Activated CD4-positive, alpha-beta T cell treated with anti-CD3 and anti-CD28 coated beads for 36 hours (primary cell): ENCODE measurements at regions of chr1 and their contacts with region 1.

Region 1: GRCh38 chr1:176206961-176207902 is at the start of gene COP1:
- DNase-seq: peak; percentile 97
- ATAC-seq: peak; percentile 82
- H3K4me3 Mint-ChIP-seq: peak within 1 kb of the TSS; percentile 98
- H3K27ac Mint-ChIP-seq: peak within 1 kb of the TSS; percentile 100
- H3K4me1 Mint-ChIP-seq: peaks cover 28% of the 10 kb centered on the region
- H3K27me3 Mint-ChIP-seq: no peaks in the 10 kb centered on the region
- total RNA-seq, gene COP1: 38.7 to 43.4 TPM

Region 2: GRCh38 chr1:176096015-176096414 is 111.2 kb before region 1 on chr1:
- CTCF ChIA-PET with region 1: no interaction called
- POLR2A ChIA-PET with region 1: no interaction called
- intact Hi-C with region 1: no loop called
- DNase-seq: no peak
- ATAC-seq: no peak
- H3K4me3 Mint-ChIP-seq: no peak overlapping the region
- H3K27ac Mint-ChIP-seq: no peak overlapping the region
- H3K4me1 Mint-ChIP-seq: no peaks in the 10 kb centered on the region
- H3K27me3 Mint-ChIP-seq: no peaks in the 10 kb centered on the region

Region 3: DNA sequence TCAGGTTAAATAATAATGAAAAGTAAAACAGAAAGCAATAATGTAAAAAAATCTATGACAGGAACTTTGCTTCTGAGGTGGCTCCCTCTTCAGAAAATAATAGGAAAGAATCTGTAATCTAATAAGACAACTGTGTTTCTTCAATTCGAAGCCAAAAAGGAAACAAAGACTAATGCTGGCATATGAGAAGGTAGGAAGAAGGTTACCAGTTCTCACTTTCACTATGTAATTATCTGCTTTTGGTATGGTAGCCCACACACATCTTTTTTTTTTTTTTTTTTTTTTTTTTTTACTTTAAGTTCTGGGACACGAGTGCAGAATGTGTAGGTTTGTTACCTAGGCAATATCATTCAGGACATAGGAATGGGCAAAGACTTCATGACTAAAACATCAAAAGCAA is 47.2 kb before region 1 on chr1:
- CTCF ChIA-PET with region 1: interaction called, 3 read pairs
- POLR2A ChIA-PET with region 1: interaction called, 5 read pairs
- intact Hi-C with region 1: loop called (anchors 1 to 2 kb)
- DNase-seq: no peak
- ATAC-seq: peak; percentile 70
- H3K4me3 Mint-ChIP-seq: peak overlapping the region; percentile 29
- H3K27ac Mint-ChIP-seq: peak overlapping the region; percentile 79
- H3K4me1 Mint-ChIP-seq: peaks cover 46% of the 10 kb centered on the region
- H3K27me3 Mint-ChIP-seq: no peaks in the 10 kb centered on the region

Region 4: GRCh38 chr1:176193023-176193422 is 14.2 kb before region 1 on chr1:
- CTCF ChIA-PET with region 1: interaction called, 4 read pairs
- POLR2A ChIA-PET with region 1: interaction called, 4 read pairs
- intact Hi-C with region 1: loop called in 1 of 2 experiments (anchors 1 kb)
- DNase-seq: no peak
- ATAC-seq: peak; percentile 61
- H3K4me3 Mint-ChIP-seq: no peak overlapping the region
- H3K27ac Mint-ChIP-seq: no peak overlapping the region
- H3K4me1 Mint-ChIP-seq: peaks cover 79% of the 10 kb centered on the region
- H3K27me3 Mint-ChIP-seq: no peaks in the 10 kb centered on the region

Region 5: DNA sequence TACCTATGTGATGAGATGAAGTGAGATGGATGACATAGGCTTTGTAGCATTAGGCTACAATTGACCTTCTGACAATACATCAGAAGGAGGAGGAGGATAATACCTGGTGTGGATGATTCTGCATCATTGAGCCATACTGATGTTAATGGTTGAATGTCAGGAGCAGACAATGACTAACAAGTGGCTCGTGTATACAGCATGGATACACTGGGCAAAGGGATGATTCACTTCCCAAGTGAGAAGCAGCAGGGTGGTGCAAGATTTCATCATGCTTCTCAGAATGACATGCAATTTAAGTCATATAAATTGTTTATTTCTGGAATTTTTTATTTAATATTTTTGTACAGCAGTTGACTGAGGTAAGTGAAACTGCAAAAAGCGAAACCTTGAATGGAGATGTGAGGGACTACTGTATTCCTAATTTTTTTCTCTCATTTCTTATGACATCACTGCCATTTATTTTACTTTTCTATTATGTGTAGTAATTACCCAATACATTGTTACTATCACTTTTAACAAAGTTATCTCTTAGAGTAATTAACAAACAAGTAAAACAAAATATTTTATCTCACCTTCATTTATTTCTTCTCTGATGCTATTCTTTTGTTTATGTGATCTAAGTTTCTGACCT is 34.3 kb after region 1 on chr1:
- CTCF ChIA-PET with region 1: no interaction called
- POLR2A ChIA-PET with region 1: no interaction called
- intact Hi-C with region 1: loop called in 1 of 2 experiments (anchors 2 kb)
- DNase-seq: peak; percentile 45
- ATAC-seq: peak; percentile 99
- H3K4me3 Mint-ChIP-seq: no peak overlapping the region
- H3K27ac Mint-ChIP-seq: peak overlapping the region; percentile 59
- H3K4me1 Mint-ChIP-seq: peaks cover 12% of the 10 kb centered on the region
- H3K27me3 Mint-ChIP-seq: peaks cover 14% of the 10 kb centered on the region

Region 6: GRCh38 chr1:176338877-176339276 is 131.6 kb after region 1 on chr1:
- CTCF ChIA-PET with region 1: no interaction called
- POLR2A ChIA-PET with region 1: no interaction called
- intact Hi-C with region 1: no loop called
- DNase-seq: no peak
- ATAC-seq: no peak
- H3K4me3 Mint-ChIP-seq: no peak overlapping the region
- H3K27ac Mint-ChIP-seq: no peak overlapping the region
- H3K4me1 Mint-ChIP-seq: no peaks in the 10 kb centered on the region
- H3K27me3 Mint-ChIP-seq: peaks cover 6% of the 10 kb centered on the region